Left cardiac atrium (tissue), 4 donors: ENCODE measurements at regions of chr1 and their contacts with region 1.

Region 1: DNA sequence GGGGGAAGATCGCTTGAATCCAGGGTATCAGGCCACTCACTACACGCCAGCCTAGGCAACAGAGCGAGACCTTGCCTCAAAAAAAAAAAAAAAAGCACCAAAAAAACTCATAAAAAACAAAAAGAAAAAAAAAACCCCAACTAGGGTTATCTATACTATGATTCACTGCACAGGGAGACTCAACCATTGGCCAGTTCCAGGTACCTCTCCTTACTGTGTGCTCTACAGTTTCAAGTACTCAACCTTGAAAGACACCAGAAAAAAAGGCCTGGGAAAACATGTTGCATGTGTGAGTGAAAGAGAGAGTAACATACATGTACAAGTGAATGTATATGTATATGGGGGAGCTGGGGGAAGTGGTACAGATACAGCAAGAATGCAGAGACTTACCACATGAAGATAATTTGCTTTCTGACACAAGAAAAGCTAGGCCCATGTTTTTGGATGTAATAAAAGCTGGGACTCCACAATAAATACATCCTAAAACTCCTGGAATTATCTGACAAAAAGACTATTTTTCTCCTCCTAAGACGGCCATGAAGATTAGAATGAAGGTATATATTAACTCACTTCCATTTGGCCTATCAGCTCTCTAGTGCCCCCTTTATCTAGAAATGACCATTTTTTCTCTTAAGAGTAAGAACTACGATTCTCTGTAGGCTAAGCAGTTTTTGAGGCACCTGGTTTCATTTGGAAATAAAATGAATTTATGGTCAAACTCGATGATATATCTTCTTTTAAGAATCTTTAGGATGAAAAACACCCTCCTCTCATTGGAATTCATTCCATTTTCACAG is 52.2 kb downstream of the SLC27A3 start:
- DNase-seq: no peak
- ATAC-seq: no peak

Region 2: DNA sequence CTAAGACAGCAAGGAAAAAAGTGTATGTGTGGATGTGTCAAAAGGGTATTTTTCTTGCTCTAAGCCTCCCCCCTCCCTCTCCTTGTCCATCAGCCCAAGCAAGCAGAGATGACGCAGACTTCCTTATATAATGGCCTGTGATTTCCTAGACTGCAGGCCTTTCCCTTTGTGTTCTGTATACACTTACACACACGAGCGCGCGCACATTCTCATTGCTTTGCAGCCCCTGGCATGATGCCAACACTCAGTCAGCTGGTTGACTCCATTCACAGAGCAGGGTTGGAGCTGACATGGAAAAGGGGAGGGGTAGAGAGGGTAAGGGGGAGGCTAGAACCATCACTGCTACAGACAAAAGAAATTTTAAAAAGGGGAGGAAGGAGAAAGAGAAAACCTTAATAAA is 53.6 kb after region 1 on chr1:
- intact Hi-C with region 1: loop called in 1 of 2 experiments (anchors 10 kb)
- DNase-seq: peak; percentile 87
- ATAC-seq: peak; percentile 94 to 95